AG04449 (cell line): ENCODE measurements at regions of chr6 and their contacts with region 1.

Region 1: DNA sequence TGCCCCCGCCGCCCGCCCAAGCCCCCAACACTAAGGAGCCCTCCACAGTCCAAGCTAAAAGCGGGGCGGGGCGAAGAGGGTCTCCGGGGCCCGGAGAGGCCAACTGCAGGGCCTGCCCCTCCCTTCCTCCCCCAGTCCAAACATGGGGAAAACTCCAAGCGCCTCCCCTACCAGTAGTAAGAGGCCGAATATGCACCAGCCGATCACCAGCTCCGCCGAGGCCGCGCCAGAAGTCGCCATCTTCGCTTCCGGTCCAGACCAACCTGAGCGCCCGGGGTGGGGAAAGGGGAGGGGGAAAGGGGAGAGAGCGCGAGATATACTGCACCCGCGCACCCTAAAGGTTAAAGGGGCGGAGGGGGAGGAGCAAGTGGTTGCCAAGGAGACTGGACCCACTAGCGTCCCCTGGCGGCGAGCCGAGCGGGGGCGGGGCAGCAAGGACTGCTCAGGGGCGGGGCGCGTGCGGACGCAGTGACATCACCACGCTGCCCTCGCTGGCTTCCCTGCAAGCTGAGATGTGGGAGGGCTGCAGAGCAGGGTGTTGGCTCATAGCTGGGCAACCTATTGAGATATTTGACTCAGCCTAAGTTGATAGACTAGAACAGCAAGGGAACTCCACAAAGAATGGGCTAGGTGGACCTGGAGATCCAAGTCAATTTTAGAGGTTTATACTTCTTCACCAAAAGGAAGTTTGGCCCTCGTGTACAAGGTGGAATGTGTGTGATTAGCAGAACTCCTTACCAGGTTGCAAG is at the start of gene LMBRD1:
- DNase-seq: peak; percentile 67
- H3K4me3 ChIP-seq: peak within 1 kb of the TSS; percentile 81
- CTCF ChIP-seq: peak; percentile 91

Region 2: GRCh38 chr6:69758214-69758613 is 38.6 kb before region 1 on chr6:
- CTCF ChIA-PET with region 1: no interaction called
- POLR2A ChIA-PET with region 1: no interaction called
- DNase-seq: no peak
- H3K4me3 ChIP-seq: no peak overlapping the region
- CTCF ChIP-seq: no peak

Region 3: GRCh38 chr6:69768664-69769063 is 28.2 kb before region 1 on chr6:
- CTCF ChIA-PET with region 1: interaction called, 13 read pairs
- POLR2A ChIA-PET with region 1: no interaction called
- DNase-seq: no peak
- H3K4me3 ChIP-seq: no peak overlapping the region
- CTCF ChIP-seq: no peak

Region 4: DNA sequence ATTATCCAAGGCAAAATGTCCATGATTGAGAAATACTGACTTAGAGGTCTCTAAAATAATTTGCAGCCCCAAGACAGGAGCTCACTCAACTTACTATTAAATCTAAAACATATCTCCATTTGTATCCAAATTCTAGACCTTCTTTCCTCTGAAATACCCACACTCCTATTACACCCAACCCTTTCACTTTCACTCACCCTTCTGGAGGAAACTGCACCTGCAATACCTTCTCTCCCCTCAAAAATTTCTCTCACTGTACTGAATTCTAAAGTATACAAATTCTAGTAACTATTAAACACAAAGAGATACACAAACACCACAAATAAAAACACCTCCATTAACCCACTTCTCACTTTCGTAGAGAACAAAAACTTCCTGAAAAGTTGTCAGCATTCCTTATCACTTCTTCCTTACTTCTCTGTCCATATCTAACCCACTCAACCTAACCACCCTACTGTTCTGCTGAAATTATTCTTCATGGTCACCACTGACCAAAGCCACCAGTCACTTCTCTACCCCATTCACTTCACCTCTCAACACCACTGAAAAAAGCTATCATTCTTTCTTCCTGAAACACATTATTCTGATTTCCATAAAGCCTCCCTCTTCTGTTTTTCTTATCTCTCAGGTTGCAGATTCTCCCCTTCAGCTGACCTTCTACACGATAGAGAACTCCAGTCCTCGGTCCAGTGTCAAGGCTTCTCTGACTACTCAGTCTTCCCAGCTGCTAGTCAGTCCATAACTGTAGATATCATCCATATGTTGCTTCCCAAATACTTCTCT is 12.0 kb before region 1 on chr6:
- CTCF ChIA-PET with region 1: interaction called, 16 read pairs
- POLR2A ChIA-PET with region 1: no interaction called
- DNase-seq: no peak
- H3K4me3 ChIP-seq: no peak overlapping the region
- CTCF ChIP-seq: no peak

Region 5: DNA sequence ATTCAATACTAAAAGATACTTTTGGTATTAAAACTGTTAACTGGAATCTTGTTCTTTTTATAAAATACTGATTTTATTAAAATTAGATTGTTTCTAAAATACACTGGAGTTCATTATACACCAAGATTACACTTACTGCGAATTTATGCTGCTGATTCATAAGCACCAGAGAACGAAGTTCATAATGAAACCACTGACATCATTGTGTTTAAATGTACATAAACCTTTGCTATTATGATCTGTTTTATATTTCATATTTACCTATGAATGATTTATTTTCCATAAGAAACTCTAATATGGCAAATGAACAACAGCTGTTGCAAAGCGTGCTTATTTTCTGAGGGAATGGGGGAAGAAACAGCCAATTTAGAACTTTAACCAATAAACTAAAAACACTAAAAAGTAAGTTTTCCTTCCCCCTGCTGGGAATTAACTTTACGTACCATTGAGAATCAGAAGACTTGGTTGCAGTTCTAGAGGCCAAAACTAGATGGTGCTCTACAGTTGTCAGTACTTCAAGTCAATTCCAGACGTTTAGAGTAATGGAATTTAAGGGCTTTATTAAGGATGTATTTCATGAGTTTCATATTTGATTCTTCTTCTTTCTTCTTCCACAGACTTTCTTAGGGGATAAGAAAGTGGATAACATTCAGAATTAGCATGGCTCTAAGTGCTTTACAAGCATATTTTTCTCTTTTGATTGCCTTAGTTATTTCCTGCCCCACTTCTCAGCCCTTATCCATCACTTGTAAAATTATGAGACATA is 38.8 kb after region 1 on chr6:
- CTCF ChIA-PET with region 1: no interaction called
- POLR2A ChIA-PET with region 1: no interaction called
- DNase-seq: peak; percentile 45
- H3K4me3 ChIP-seq: no peak overlapping the region
- CTCF ChIP-seq: peak; percentile 68

Region 6: DNA sequence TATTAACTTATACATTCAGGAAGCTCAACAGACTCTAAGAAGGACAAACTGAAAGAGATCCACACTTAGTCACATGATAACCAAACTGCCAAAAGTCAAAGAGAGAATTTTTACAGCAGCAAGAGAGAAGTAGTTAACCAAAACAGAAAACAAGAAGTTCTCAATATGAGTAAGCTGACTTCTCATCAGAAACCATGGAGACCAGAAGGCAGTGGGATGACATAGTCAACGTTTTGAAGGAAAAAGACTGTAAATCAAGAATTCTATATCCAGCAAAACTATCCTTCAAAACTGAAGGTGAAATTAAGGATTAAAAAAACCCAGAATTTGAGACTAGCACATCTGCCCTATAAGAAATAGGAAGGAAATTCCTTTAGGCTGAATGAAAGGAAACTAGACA is 129.9 kb after region 1 on chr6:
- CTCF ChIA-PET with region 1: no interaction called
- POLR2A ChIA-PET with region 1: no interaction called
- DNase-seq: no peak
- H3K4me3 ChIP-seq: no peak overlapping the region
- CTCF ChIP-seq: no peak

Region 7: DNA sequence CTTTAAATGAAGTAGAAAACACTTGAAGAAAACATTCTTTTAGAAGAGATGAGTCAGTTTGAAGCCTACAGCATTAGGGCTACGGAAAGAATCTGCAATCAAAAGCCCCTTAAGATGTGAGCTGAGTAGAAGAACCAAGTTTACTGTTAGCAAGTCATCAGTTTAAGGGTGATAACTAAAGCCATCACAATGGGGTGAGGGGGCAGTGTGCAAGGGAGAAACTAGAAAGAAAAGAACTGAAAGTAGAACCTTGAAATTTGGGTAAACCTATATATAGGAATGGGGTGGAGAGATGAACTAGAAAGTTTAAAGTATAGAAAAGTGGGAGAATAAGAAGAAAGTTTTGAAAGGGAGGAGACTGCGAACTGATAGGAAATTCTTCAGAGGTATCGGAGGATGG is 282.4 kb after region 1 on chr6:
- CTCF ChIA-PET with region 1: no interaction called
- POLR2A ChIA-PET with region 1: no interaction called
- DNase-seq: no peak
- H3K4me3 ChIP-seq: no peak overlapping the region
- CTCF ChIP-seq: no peak